GM12878 (cell line): ENCODE measurements at regions of chr3 and their contacts with region 1.

Region 1: DNA sequence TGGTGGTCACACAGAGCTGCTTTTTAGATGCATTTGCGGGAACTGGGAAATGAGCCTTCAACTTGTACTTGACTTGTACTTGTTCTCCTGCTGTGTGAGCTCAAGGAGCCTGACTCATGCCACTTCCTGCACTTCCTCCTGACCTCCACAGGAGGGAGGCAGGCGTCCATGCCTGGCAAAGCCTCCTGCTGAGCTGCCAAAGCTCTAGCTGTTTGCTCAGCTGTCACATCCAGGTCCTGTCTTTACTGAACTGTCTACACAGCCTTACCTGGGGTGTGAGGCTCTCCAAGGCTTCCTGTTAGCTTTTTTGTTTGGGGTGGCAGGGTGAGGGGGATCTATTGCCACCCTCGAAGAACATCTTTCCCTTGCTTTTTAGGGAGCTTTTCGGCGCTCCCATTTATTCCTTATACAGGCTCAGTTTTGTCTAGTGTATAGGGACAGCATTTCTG is 6.4 kb downstream of the THPO start:
- DNase-seq: no peak
- ATAC-seq: peak; percentile 99
- H3K4me3 ChIP-seq: no peak overlapping the region
- H3K27ac ChIP-seq: no peak overlapping the region
- H3K4me1 ChIP-seq: no peaks in the 10 kb centered on the region
- H3K27me3 ChIP-seq: peaks cover 0 to 6% of the 10 kb centered on the region in 2 experiments; a peak in 2 of 4 replicates
- CTCF ChIP-seq: peak; percentile 83 to 97 (median 97); a peak in 5 of 6 replicates
- EP300 ChIP-seq: no peak
- POLR2A ChIP-seq: no peak
- RAD21 ChIP-seq: peak; percentile 86

Region 2: GRCh38 chr3:184289426-184289938 is 82.1 kb before region 1 on chr3:
- CTCF ChIA-PET with region 1: no interaction called
- POLR2A ChIA-PET with region 1: no interaction called
- RAD21 ChIA-PET with region 1: no interaction called
- SMC1A ChIA-PET with region 1: no interaction called
- in situ Hi-C with region 1: no loop called
- intact Hi-C with region 1: no loop called
- DNase-seq: no peak
- ATAC-seq: peak; percentile 88
- H3K4me3 ChIP-seq: no peak overlapping the region
- H3K27ac ChIP-seq: no peak overlapping the region
- H3K4me1 ChIP-seq: no peaks in the 10 kb centered on the region
- H3K27me3 ChIP-seq: no peaks in the 10 kb centered on the region; a peak in 1 of 4 replicates
- CTCF ChIP-seq: peak; percentile 63 to 68 (median 68)
- EP300 ChIP-seq: no peak
- POLR2A ChIP-seq: no peak
- RAD21 ChIP-seq: peak; percentile 76

Region 3: GRCh38 chr3:184354121-184354728 is 17.4 kb before region 1 on chr3:
- CTCF ChIA-PET with region 1: interaction called, 16 read pairs
- POLR2A ChIA-PET with region 1: no interaction called
- RAD21 ChIA-PET with region 1: interaction called, 11 read pairs
- SMC1A ChIA-PET with region 1: interaction called, 3 read pairs
- in situ Hi-C with region 1: no loop called
- intact Hi-C with region 1: no loop called
- DNase-seq: no peak
- ATAC-seq: peak; percentile 94
- H3K4me3 ChIP-seq: no peak overlapping the region
- H3K27ac ChIP-seq: no peak overlapping the region
- H3K4me1 ChIP-seq: no peaks in the 10 kb centered on the region
- H3K27me3 ChIP-seq: no peaks in the 10 kb centered on the region; a peak in 1 of 4 replicates
- CTCF ChIP-seq: peak; percentile 78 to 91 (median 79)
- EP300 ChIP-seq: no peak
- POLR2A ChIP-seq: no peak
- RAD21 ChIP-seq: peak; percentile 61

Region 4: DNA sequence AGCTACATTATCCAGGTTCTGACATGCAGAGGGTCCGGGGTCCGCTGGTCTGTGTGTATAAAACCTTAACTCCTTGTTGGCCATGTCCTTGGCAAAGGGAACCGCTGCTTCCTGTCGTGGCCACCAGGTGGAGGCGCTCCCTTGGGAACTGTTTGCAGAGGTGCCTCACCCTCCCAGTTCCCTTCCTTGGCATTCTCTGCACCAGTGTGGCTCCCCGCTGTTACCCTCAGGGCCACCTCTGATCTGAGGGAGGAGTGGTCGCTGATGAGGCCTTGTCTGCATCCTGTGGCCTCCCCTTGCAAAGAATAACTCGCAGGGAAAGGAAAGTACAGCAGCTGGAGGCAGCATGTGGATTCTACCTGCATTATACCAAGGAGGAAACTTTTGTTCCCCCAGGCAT is 97.8 kb after region 1 on chr3:
- CTCF ChIA-PET with region 1: interaction called, 11 read pairs
- POLR2A ChIA-PET with region 1: no interaction called
- RAD21 ChIA-PET with region 1: interaction called, 9 read pairs
- SMC1A ChIA-PET with region 1: interaction called, 4 read pairs
- in situ Hi-C with region 1: no loop called
- intact Hi-C with region 1: loop called (anchors 2 kb)
- DNase-seq: no peak
- ATAC-seq: peak; percentile 78
- H3K4me3 ChIP-seq: no peak overlapping the region
- H3K27ac ChIP-seq: no peak overlapping the region
- H3K4me1 ChIP-seq: no peaks in the 10 kb centered on the region
- H3K27me3 ChIP-seq: peaks cover 3 to 6% of the 10 kb centered on the region in 2 experiments; a peak in 3 of 4 replicates
- CTCF ChIP-seq: peak; percentile 40 to 59 (median 48)
- EP300 ChIP-seq: no peak
- POLR2A ChIP-seq: no peak
- RAD21 ChIP-seq: peak; percentile 31; the same call in 1 of the 2 replicates